Aorta (tissue), 5 donors: ENCODE measurements at regions of chr2 and their contacts with region 1.

Region 1: DNA sequence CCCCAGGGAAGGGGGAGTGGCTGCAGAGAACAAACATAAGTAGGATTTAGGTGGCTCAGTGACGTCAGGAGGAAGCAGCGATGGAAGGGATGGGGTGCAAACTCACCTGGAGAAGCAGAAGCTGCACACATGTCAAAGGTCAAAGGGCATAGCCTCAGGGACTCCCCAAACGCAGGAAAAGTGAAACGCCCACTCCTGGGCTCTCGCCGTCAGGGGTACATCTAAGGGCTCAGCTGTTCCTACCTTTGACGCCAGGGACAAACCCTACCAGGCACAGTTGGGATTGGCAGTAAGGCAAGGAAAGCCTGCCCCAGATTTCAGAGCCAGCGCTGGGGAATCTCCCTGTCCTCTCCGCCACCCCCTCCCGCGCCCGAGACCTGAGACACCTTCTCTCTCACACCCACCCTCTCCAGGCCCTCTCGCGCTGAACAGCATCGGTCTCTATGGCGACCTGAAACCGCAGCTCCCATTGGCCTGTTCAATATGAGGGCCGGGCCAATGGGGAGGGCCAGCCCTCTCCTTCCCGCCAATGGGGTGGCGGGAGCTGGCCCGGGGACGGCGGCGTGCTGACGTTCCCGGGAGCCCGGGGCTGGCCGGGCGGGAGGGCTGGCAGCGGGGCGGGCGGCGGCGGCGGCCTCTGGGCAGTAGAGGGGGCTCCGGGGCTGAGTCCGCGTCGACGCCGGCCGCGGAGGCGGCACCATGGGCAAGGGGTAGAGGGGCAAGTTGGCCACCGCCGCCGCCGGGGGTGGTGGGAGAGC is at the starts of genes CCDC148 and PKP4:
- DNase-seq: peak; percentile 92 to 94
- ATAC-seq: peak; percentile 97
- H3K4me3 ChIP-seq: peak within 1 kb of the TSS; percentile 84 to 86
- H3K27ac ChIP-seq: peak within 1 kb of the TSS; percentile 46 to 69
- H3K4me1 ChIP-seq: no peaks in the 10 kb centered on the region
- H3K27me3 ChIP-seq: no peaks in the 10 kb centered on the region
- total RNA-seq, gene CCDC148: 0.52 to 1.6 TPM
- total RNA-seq, gene PKP4: 53.3 to 128 TPM

Region 2: GRCh38 chr2:158519481-158519880 is 63.0 kb after region 1 on chr2:
- intact Hi-C with region 1: no loop called
- DNase-seq: no peak
- ATAC-seq: no peak
- H3K4me3 ChIP-seq: no peak overlapping the region
- H3K27ac ChIP-seq: no peak overlapping the region
- H3K4me1 ChIP-seq: no peaks in the 10 kb centered on the region
- H3K27me3 ChIP-seq: no peaks in the 10 kb centered on the region

Region 3: GRCh38 chr2:158600155-158600802 is 143.8 kb after region 1 on chr2:
- intact Hi-C with region 1: loop called in 1 of 2 experiments (anchors 10 kb)
- DNase-seq: peak; percentile 75 to 79
- ATAC-seq: peak; percentile 70
- H3K4me3 ChIP-seq: no peak overlapping the region
- H3K27ac ChIP-seq: no peak overlapping the region
- H3K4me1 ChIP-seq: peaks cover 0 to 9% of the 10 kb centered on the region in 2 donors
- H3K27me3 ChIP-seq: no peaks in the 10 kb centered on the region

Region 4: GRCh38 chr2:159671047-159671446 is 1214.6 kb after region 1 on chr2:
- intact Hi-C with region 1: no loop called
- DNase-seq: no peak
- ATAC-seq: no peak
- H3K4me3 ChIP-seq: no peak overlapping the region
- H3K27ac ChIP-seq: no peak overlapping the region
- H3K4me1 ChIP-seq: no peaks in the 10 kb centered on the region
- H3K27me3 ChIP-seq: no peaks in the 10 kb centered on the region